CD8-positive, alpha-beta T cell (primary cell): ENCODE measurements at regions of chr13 and their contacts with region 1.

Region 1: GRCh38 chr13:102773441-102774215 is at the start of gene TEX30:
- DNase-seq: peak; percentile 75 to 93 (median 86)
- ATAC-seq: peak; percentile 96
- H3K4me3 ChIP-seq: peak within 1 kb of the TSS; percentile 66 to 70
- H3K4me3 Mint-ChIP-seq: peak within 1 kb of the TSS; percentile 88
- H3K27ac ChIP-seq: peak within 1 kb of the TSS; percentile 70 to 82
- H3K27ac Mint-ChIP-seq: peak within 1 kb of the TSS; percentile 91
- H3K4me1 ChIP-seq: peaks cover 15% of the 10 kb centered on the region
- H3K4me1 Mint-ChIP-seq: peaks cover 34% of the 10 kb centered on the region
- H3K27me3 ChIP-seq: no peaks in the 10 kb centered on the region
- H3K27me3 Mint-ChIP-seq: no peaks in the 10 kb centered on the region
- CTCF ChIP-seq: no peak
- total RNA-seq, gene TEX30: 10.4 to 10.9 TPM

Region 2: GRCh38 chr13:102128216-102128810 is 645.3 kb before region 1 on chr13:
- CTCF ChIA-PET with region 1: no interaction called
- POLR2A ChIA-PET with region 1: no interaction called
- intact Hi-C with region 1: no loop called
- DNase-seq: no peak
- ATAC-seq: no peak
- H3K4me3 ChIP-seq: no peak overlapping the region
- H3K4me3 Mint-ChIP-seq: no peak overlapping the region
- H3K27ac ChIP-seq: no peak overlapping the region
- H3K27ac Mint-ChIP-seq: no peak overlapping the region
- H3K4me1 ChIP-seq: no peaks in the 10 kb centered on the region
- H3K4me1 Mint-ChIP-seq: no peaks in the 10 kb centered on the region
- H3K27me3 ChIP-seq: no peaks in the 10 kb centered on the region
- H3K27me3 Mint-ChIP-seq: peaks cover 3% of the 10 kb centered on the region
- CTCF ChIP-seq: no peak

Region 3: DNA sequence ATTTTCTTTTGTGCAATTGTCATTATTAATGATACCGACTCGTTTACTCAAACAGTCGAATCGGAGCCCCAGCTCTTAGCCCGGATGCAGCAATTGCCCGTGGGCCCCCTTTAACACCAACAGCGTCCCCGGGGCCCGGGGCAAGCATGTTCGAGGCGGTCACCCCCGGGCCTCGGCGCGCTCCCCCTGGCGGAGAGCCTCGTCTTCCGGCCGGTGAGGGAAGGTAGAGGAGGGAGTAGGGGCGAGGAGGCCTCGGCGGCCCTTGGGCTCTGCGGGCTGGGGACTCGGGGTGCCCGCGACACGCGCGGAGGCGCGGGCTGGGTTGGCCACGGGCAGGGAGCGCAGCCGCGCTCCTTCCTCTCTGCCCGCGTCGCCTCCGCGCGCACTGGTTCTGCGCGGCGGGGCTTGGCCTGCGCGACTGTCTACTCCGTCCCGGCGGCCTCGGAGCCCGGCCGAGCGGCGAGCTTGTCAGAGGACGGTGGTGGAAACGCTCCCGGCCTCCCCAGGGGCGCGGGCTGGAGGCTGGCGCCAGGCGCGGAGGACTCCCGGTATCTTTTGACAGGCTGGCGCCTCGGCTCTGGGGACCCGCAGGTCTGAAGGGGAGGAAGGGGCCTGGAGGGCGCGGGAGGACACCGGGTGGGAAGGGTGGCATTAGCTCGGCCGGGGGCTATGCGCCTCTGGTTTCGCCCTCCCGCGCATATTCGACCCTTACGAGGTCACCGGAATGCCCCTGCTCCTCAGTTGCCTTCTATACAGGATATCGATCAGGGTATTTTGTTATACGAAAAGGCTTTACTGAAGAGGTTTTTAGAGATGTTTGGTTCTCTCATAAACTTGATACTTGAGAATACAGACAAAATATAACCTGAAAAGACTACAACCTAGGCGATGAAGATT is 26.8 kb after region 1 on chr13:
- CTCF ChIA-PET with region 1: no interaction called
- POLR2A ChIA-PET with region 1: interaction called, 11 read pairs
- intact Hi-C with region 1: loop called (anchors 1 kb)
- DNase-seq: peak; percentile 65 to 89 (median 84)
- ATAC-seq: peak; percentile 77
- H3K4me3 ChIP-seq: peak overlapping the region; percentile 62 to 86
- H3K4me3 Mint-ChIP-seq: peak overlapping the region; percentile 92
- H3K27ac ChIP-seq: peak overlapping the region; percentile 36 to 44
- H3K27ac Mint-ChIP-seq: peak overlapping the region; percentile 74
- H3K4me1 ChIP-seq: peaks cover 10% of the 10 kb centered on the region
- H3K4me1 Mint-ChIP-seq: peaks cover 30% of the 10 kb centered on the region
- H3K27me3 ChIP-seq: peaks cover 0 to 5% of the 10 kb centered on the region in 2 experiments
- H3K27me3 Mint-ChIP-seq: peaks cover 11% of the 10 kb centered on the region
- CTCF ChIP-seq: peak; percentile 64

Region 4: GRCh38 chr13:102812611-102813287 is 39.1 kb after region 1 on chr13:
- CTCF ChIA-PET with region 1: no interaction called
- POLR2A ChIA-PET with region 1: no interaction called
- intact Hi-C with region 1: no loop called
- DNase-seq: no peak
- ATAC-seq: peak; percentile 40
- H3K4me3 ChIP-seq: no peak overlapping the region
- H3K4me3 Mint-ChIP-seq: no peak overlapping the region
- H3K27ac ChIP-seq: no peak overlapping the region
- H3K27ac Mint-ChIP-seq: no peak overlapping the region
- H3K4me1 ChIP-seq: no peaks in the 10 kb centered on the region
- H3K4me1 Mint-ChIP-seq: peaks cover 31% of the 10 kb centered on the region
- H3K27me3 ChIP-seq: no peaks in the 10 kb centered on the region
- H3K27me3 Mint-ChIP-seq: no peaks in the 10 kb centered on the region
- CTCF ChIP-seq: no peak